ENCODE measurements at regions of chr11 and their contacts with region 1.

Region 1: GRCh38 chr11:64652586-64653387 is 61.8 kb downstream of the SLC22A12 start:
- DNase-seq: peak; percentile 87
- ATAC-seq: peak; percentile 75
- H3K4me3 Mint-ChIP-seq: no peak overlapping the region
- H3K27ac Mint-ChIP-seq: no peak overlapping the region
- H3K4me1 Mint-ChIP-seq: peaks cover 7% of the 10 kb centered on the region
- H3K27me3 Mint-ChIP-seq: peaks cover 3% of the 10 kb centered on the region

Region 2: DNA sequence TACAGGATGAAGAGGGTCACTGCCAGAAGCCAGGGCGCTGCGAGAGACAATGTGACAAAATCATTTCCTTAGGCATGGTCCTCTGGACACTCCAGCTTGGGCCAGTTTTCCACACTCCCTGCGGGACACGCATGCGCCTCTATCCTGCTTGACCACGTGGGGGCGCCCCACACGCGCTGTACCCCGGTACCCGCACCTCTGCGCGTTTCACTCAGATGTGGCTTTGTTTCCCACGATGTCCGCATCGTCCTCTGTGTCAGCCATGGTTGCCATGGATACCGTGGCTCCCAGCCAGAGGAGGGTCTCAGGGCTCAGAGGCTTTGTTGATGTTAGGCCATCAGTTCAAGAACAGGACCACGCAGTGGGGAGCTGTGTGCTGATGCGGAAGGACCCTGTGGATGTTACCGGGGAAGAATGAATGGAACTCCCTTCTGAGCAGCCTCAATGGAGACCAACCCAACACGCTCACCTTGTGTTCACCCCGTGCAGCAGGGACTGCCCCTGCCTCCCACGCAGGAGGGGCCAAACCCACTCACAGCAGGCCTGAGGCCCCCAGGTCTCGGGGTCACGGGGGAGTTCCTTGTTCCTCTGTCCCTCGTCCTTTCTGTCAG is 162.9 kb before region 1 on chr11:
- CTCF ChIA-PET with region 1: interaction called, 7 read pairs
- POLR2A ChIA-PET with region 1: no interaction called
- intact Hi-C with region 1: loop called (anchors 1 to 2 kb)
- DNase-seq: peak; percentile 75
- ATAC-seq: peak; percentile 81
- H3K4me3 Mint-ChIP-seq: no peak overlapping the region
- H3K27ac Mint-ChIP-seq: no peak overlapping the region
- H3K4me1 Mint-ChIP-seq: peaks cover 14% of the 10 kb centered on the region
- H3K27me3 Mint-ChIP-seq: peaks cover 26% of the 10 kb centered on the region

Region 3: GRCh38 chr11:64553551-64554201 is 99.1 kb before region 1 on chr11:
- CTCF ChIA-PET with region 1: no interaction called
- POLR2A ChIA-PET with region 1: no interaction called
- intact Hi-C with region 1: loop called (anchors 1 kb)
- DNase-seq: peak; percentile 72
- ATAC-seq: peak; percentile 39
- H3K4me3 Mint-ChIP-seq: no peak overlapping the region
- H3K27ac Mint-ChIP-seq: no peak overlapping the region
- H3K4me1 Mint-ChIP-seq: no peaks in the 10 kb centered on the region
- H3K27me3 Mint-ChIP-seq: no peaks in the 10 kb centered on the region

Region 4: GRCh38 chr11:66035653-66036333 is 1383.0 kb after region 1 on chr11:
- CTCF ChIA-PET with region 1: no interaction called
- POLR2A ChIA-PET with region 1: no interaction called
- intact Hi-C with region 1: no loop called
- DNase-seq: no peak
- ATAC-seq: no peak
- H3K4me3 Mint-ChIP-seq: no peak overlapping the region
- H3K27ac Mint-ChIP-seq: no peak overlapping the region
- H3K4me1 Mint-ChIP-seq: no peaks in the 10 kb centered on the region
- H3K27me3 Mint-ChIP-seq: peaks cover 4% of the 10 kb centered on the region